ENCODE measurements at regions of chr2 and their contacts with region 1.

Region 1: GRCh38 chr2:210002158-210003157 is at the start of gene RPE:
- DNase-seq: peak; percentile 96 to 98
- ATAC-seq: peak; percentile 100
- H3K4me3 ChIP-seq: peak within 1 kb of the TSS; percentile 74 to 99 (median 88)
- H3K27ac ChIP-seq: peak within 1 kb of the TSS; percentile 55 to 88 (median 84)
- H3K4me1 ChIP-seq: peaks cover 4 to 52% (median 45%) of the 10 kb centered on the region in 9 donors
- H3K27me3 ChIP-seq: no peaks in the 10 kb centered on the region
- CTCF ChIP-seq: no peak
- total RNA-seq, gene RPE: 12.4 to 25.6 (median 15.1) TPM

Region 2: GRCh38 chr2:210171309-210172203 is 169.1 kb after region 1 on chr2 and contains the start of gene KANSL1L:
- intact Hi-C with region 1: loop called in 6 of 10 experiments (anchors 1 to 10 kb)
- DNase-seq: peak; percentile 99
- ATAC-seq: peak; percentile 92 to 97 (median 94)
- H3K4me3 ChIP-seq: peak within 1 kb of the TSS; percentile 71 to 94 (median 86)
- H3K27ac ChIP-seq: peak within 1 kb of the TSS; percentile 97 to 100 (median 99)
- H3K4me1 ChIP-seq: peaks cover 3 to 42% (median 39%) of the 10 kb centered on the region in 9 donors
- H3K27me3 ChIP-seq: peaks cover 0 to 9% (median 0%) of the 10 kb centered on the region in 7 donors
- CTCF ChIP-seq: peak in 2 of 9 donors; percentile 5 to 13
- total RNA-seq, gene KANSL1L: 8.9 to 27.3 (median 19.8) TPM

Measured in heart right ventricle (tissue), 16 donors.